Natural killer cell (primary cell): ENCODE measurements at regions of chrX and their contacts with region 1.

Region 1: GRCh38 chrX:8743126-8743732 is 11.3 kb upstream of the ANOS1 start:
- DNase-seq: peak; percentile 46 to 71
- ATAC-seq: peak in 2 of 3 donors; percentile 42 to 67
- H3K4me3 ChIP-seq: no peak overlapping the region
- H3K4me3 Mint-ChIP-seq: no peak overlapping the region
- H3K27ac ChIP-seq: no peak overlapping the region
- H3K27ac Mint-ChIP-seq: no peak overlapping the region
- H3K4me1 ChIP-seq: no peaks in the 10 kb centered on the region
- H3K4me1 Mint-ChIP-seq: no peaks in the 10 kb centered on the region
- H3K27me3 ChIP-seq: no peaks in the 10 kb centered on the region
- H3K27me3 Mint-ChIP-seq: peaks cover 3 to 6% of the 10 kb centered on the region in 2 donors
- CTCF ChIP-seq: peak; percentile 65

Region 2: DNA sequence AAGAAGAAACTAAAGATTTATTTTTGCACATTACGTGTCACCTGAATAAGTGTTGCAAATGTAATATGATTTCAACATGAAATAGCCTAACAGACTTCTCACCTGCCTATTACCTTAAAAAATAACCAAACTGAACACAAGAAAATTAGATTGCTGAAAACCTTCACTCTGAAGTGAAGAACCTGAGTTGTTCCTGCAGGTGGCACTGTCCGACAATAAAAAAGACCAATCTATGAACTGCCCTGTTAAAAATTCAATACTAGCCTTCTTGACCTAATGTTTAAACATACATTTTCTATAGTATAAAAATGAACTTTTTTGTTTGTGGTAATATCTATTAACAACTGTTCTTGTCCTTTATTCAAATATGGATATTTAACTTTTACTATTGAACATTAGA is 746.8 kb before region 1 on chrX:
- intact Hi-C with region 1: loop called (anchors 1 kb)
- DNase-seq: peak in 1 of 2 donors; percentile 63
- ATAC-seq: peak in 2 of 3 donors; percentile 31 to 67
- H3K4me3 ChIP-seq: no peak overlapping the region
- H3K4me3 Mint-ChIP-seq: no peak overlapping the region
- H3K27ac ChIP-seq: no peak overlapping the region
- H3K27ac Mint-ChIP-seq: no peak overlapping the region
- H3K4me1 ChIP-seq: no peaks in the 10 kb centered on the region
- H3K4me1 Mint-ChIP-seq: no peaks in the 10 kb centered on the region
- H3K27me3 ChIP-seq: no peaks in the 10 kb centered on the region
- H3K27me3 Mint-ChIP-seq: no peaks in the 10 kb centered on the region
- CTCF ChIP-seq: peak; percentile 56

Region 3: DNA sequence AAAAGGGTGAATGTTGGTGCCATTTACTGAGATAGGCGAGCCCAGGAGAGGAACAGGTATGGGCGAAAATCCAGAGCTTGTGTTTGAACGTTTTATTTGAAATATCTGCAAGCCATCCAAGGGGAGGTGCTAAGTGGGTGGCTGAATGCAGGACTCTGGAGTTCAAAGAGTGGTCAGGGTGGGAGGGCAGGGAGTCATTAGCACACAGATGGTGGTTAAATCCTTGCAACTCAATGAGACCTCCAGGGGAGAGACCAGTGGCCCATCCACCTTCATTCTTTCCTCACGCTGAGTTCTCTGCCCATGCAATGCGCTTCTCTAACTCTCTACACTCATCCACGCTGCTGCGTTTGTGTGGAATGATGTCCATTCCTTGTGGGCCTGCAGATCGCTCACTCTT is 177.5 kb before region 1 on chrX:
- intact Hi-C with region 1: no loop called
- DNase-seq: no peak
- ATAC-seq: no peak
- H3K4me3 ChIP-seq: no peak overlapping the region
- H3K4me3 Mint-ChIP-seq: no peak overlapping the region
- H3K27ac ChIP-seq: no peak overlapping the region
- H3K27ac Mint-ChIP-seq: no peak overlapping the region
- H3K4me1 ChIP-seq: no peaks in the 10 kb centered on the region
- H3K4me1 Mint-ChIP-seq: no peaks in the 10 kb centered on the region
- H3K27me3 ChIP-seq: no peaks in the 10 kb centered on the region
- H3K27me3 Mint-ChIP-seq: no peaks in the 10 kb centered on the region
- CTCF ChIP-seq: no peak